ENCODE measurements at regions of chr11 and their contacts with region 1.

Region 1: GRCh38 chr11:110429731-110430266 is at the start of gene FDX1:
- DNase-seq: peak; percentile 87
- ATAC-seq: peak; percentile 86
- H3K4me3 Mint-ChIP-seq: peak within 1 kb of the TSS; percentile 95
- H3K27ac Mint-ChIP-seq: peak within 1 kb of the TSS; percentile 87
- H3K4me1 Mint-ChIP-seq: peaks cover 42% of the 10 kb centered on the region
- H3K27me3 Mint-ChIP-seq: no peaks in the 10 kb centered on the region
- CTCF ChIP-seq: no peak
- total RNA-seq, gene FDX1: 8.7 and 9.4 TPM in 2 replicates

Region 2: DNA sequence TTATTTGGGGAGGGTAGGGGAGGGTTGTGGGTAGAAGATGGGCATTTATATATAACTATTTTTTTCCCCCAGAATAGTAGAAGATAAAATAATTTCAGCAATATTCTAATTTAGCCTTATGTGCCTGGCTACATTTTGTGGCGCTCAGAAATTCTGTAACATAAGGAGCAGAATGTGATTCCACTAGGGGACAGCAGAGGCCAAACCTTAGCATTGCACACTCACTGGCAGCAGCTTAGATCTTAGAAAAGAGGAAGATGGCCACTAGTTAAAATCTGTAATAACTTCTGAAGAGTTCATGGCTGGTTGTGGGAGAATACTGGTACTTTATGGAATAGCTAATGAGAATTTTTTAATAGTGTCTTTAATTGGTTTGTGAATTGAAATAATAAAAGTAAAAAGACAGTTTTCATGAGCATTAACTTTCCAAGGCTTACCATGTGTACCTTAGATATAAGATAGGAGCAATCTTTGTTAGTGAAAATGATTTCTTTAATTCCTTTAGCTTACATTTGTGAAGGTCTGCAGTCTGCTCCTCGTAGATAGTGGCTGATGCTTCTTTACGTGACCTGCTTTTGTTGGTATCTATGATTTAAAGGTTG is 1731.8 kb before region 1 on chr11:
- CTCF ChIA-PET with region 1: no interaction called
- POLR2A ChIA-PET with region 1: no interaction called
- intact Hi-C with region 1: loop called (anchors 10 kb)
- DNase-seq: no peak
- ATAC-seq: peak; percentile 92
- H3K4me3 Mint-ChIP-seq: no peak overlapping the region
- H3K27ac Mint-ChIP-seq: no peak overlapping the region
- H3K4me1 Mint-ChIP-seq: no peaks in the 10 kb centered on the region
- H3K27me3 Mint-ChIP-seq: no peaks in the 10 kb centered on the region
- CTCF ChIP-seq: no peak

Region 3: GRCh38 chr11:110026858-110027626 is 402.8 kb before region 1 on chr11:
- CTCF ChIA-PET with region 1: no interaction called
- POLR2A ChIA-PET with region 1: no interaction called
- intact Hi-C with region 1: loop called (anchors 1 kb)
- DNase-seq: no peak
- ATAC-seq: peak; percentile 95
- H3K4me3 Mint-ChIP-seq: peak overlapping the region; percentile 21
- H3K27ac Mint-ChIP-seq: peak overlapping the region; percentile 59
- H3K4me1 Mint-ChIP-seq: peaks cover 30% of the 10 kb centered on the region
- H3K27me3 Mint-ChIP-seq: peaks cover 34% of the 10 kb centered on the region
- CTCF ChIP-seq: no peak

Region 4: DNA sequence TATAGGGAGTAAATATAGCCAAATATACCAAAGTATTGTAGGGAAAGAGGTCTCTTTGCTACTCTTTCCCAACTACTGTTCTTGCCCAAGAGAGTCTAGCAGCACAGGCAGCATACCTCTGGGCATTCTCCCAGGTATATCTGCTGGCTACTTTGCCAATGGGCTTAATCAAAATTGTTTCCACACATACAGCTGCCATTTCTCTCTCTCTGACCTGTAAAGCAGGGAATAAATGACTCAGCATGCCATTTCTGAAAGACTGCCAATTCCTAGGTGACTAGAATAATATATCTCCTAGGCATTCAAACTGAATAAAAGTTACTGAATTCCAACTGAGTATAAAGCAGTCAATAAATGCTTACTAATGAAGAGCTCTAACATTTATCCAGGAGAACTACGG is 178.0 kb before region 1 on chr11:
- CTCF ChIA-PET with region 1: interaction called, 3 read pairs
- POLR2A ChIA-PET with region 1: no interaction called
- intact Hi-C with region 1: loop called (anchors 5 kb)
- DNase-seq: no peak
- ATAC-seq: no peak
- H3K4me3 Mint-ChIP-seq: no peak overlapping the region
- H3K27ac Mint-ChIP-seq: no peak overlapping the region
- H3K4me1 Mint-ChIP-seq: no peaks in the 10 kb centered on the region
- H3K27me3 Mint-ChIP-seq: no peaks in the 10 kb centered on the region
- CTCF ChIP-seq: no peak

Region 5: DNA sequence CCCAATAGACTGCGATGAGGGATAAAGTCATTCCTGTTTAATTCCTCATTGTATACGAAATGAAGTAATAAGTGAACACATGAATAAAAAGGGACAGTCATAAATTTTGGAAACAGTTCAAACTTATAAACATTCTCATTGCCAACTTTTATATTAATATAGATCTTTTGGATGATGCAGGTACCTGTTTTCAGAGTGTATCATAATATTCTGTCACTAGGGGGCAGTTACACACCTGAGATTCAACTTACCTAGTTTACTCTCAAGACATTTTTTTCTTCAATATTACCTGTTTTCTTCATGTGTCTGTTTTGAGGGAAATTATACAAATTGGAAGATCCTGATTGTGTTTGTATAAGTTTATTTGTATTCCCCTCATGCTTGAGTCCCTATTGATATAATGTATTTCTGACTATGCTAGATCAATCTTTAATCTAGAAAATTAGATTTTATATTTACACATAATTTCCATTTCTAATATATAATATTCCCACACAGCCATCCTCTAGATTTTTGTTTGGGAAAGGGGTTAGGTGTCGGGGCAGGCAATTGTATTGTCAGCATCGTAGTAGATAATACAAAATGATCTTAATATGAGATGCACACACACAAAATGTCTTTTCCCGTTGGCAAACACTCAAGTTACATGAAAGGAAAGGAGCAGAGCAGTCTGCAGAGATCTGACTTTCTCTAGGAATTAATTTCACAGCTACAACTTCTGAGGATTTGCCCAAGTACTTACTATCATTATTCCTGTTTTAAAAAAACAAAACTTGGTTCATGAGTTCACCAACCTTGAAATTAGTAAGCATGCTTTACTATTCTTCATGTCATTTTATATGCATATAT is 18.3 kb after region 1 on chr11:
- CTCF ChIA-PET with region 1: interaction called, 14 read pairs
- POLR2A ChIA-PET with region 1: no interaction called
- intact Hi-C with region 1: no loop called
- DNase-seq: no peak
- ATAC-seq: no peak
- H3K4me3 Mint-ChIP-seq: no peak overlapping the region
- H3K27ac Mint-ChIP-seq: no peak overlapping the region
- H3K4me1 Mint-ChIP-seq: peaks cover 7% of the 10 kb centered on the region
- H3K27me3 Mint-ChIP-seq: no peaks in the 10 kb centered on the region
- CTCF ChIP-seq: no peak

Region 6: GRCh38 chr11:110613197-110613918 is 183.6 kb after region 1 on chr11:
- CTCF ChIA-PET with region 1: no interaction called
- POLR2A ChIA-PET with region 1: no interaction called
- intact Hi-C with region 1: no loop called
- DNase-seq: no peak
- ATAC-seq: no peak
- H3K4me3 Mint-ChIP-seq: no peak overlapping the region
- H3K27ac Mint-ChIP-seq: no peak overlapping the region
- H3K4me1 Mint-ChIP-seq: no peaks in the 10 kb centered on the region
- H3K27me3 Mint-ChIP-seq: peaks cover 4% of the 10 kb centered on the region
- CTCF ChIP-seq: no peak

Region 7: GRCh38 chr11:110833033-110833484 is 403.3 kb after region 1 on chr11:
- CTCF ChIA-PET with region 1: no interaction called
- POLR2A ChIA-PET with region 1: no interaction called
- intact Hi-C with region 1: no loop called
- DNase-seq: no peak
- ATAC-seq: no peak
- H3K4me3 Mint-ChIP-seq: no peak overlapping the region
- H3K27ac Mint-ChIP-seq: no peak overlapping the region
- H3K4me1 Mint-ChIP-seq: no peaks in the 10 kb centered on the region
- H3K27me3 Mint-ChIP-seq: peaks cover 5% of the 10 kb centered on the region
- CTCF ChIP-seq: no peak

Region 8: DNA sequence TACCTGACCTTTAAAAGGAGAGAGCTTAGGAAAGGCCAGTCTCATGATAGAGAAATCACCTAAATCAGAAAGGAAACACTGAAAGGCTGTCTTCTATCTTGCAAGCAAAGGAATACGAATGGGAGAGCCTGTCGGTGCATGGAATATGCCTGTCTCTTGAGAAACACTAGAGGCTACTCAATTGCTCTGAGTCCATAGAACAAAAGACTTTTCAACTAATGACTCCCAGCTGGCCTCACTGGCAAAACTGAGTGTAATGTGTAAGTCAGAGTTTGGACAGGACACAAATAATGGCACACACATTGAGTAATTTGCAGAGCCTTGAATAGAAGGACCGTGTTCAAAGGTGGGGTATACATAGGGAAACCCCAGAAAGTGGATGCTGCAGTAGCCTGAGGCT is 453.5 kb after region 1 on chr11:
- CTCF ChIA-PET with region 1: no interaction called
- POLR2A ChIA-PET with region 1: no interaction called
- intact Hi-C with region 1: no loop called
- DNase-seq: no peak
- ATAC-seq: no peak
- H3K4me3 Mint-ChIP-seq: no peak overlapping the region
- H3K27ac Mint-ChIP-seq: no peak overlapping the region
- H3K4me1 Mint-ChIP-seq: no peaks in the 10 kb centered on the region
- H3K27me3 Mint-ChIP-seq: no peaks in the 10 kb centered on the region
- CTCF ChIP-seq: no peak

Region 9: DNA sequence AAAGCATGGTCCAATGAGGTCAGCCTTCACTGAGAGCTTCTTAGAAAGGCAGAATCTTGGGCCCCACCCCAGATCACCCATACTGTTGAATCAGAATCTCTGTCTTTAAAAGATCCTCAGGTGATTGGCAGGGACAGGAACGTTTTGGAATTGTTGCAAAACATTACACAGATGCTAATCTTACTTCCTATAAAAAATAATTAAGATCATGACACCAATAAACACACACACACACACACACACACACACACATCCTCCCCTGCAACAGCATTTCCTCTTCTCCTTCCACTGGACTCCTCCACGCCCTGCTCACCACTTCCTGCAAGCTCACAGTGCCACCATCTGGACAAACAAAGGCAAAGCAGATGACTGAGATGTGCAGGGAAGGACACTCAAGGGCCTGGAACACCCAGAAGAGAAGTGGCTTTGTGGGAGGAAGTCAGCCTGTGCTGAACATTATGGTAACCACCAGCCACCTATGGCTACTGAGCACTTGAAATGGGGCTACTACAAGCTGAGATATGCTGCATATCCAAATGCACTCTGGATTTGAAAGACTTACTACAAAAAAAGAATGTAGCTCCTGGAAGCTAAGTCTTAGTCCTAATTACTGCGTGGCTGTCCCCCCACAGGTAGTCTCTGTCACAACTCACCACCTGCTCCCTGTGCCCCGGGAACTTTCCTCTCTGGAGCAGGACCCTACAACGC is 1016.8 kb after region 1 on chr11:
- CTCF ChIA-PET with region 1: interaction called, 14 read pairs
- POLR2A ChIA-PET with region 1: interaction called, 3 read pairs
- intact Hi-C with region 1: no loop called
- DNase-seq: peak; percentile 55
- ATAC-seq: peak; percentile 95
- H3K4me3 Mint-ChIP-seq: no peak overlapping the region
- H3K27ac Mint-ChIP-seq: peak overlapping the region; percentile 43
- H3K4me1 Mint-ChIP-seq: peaks cover 36% of the 10 kb centered on the region
- H3K27me3 Mint-ChIP-seq: peaks cover 2% of the 10 kb centered on the region
- CTCF ChIP-seq: no peak

Region 10: GRCh38 chr11:111878849-111879636 is 1449.2 kb after region 1 on chr11 and contains the starts of genes CFAP68 and FDXACB1:
- CTCF ChIA-PET with region 1: no interaction called
- POLR2A ChIA-PET with region 1: no interaction called
- intact Hi-C with region 1: loop called (anchors 10 kb)
- DNase-seq: peak; percentile 88
- ATAC-seq: peak; percentile 88
- H3K4me3 Mint-ChIP-seq: peak within 1 kb of the TSS; percentile 96
- H3K27ac Mint-ChIP-seq: peak within 1 kb of the TSS; percentile 100
- H3K4me1 Mint-ChIP-seq: peaks cover 17% of the 10 kb centered on the region
- H3K27me3 Mint-ChIP-seq: no peaks in the 10 kb centered on the region
- CTCF ChIP-seq: peak; percentile 59
- total RNA-seq, gene CFAP68: 11.6 and 13.7 TPM in 2 replicates
- total RNA-seq, gene FDXACB1: 7.4 and 7.8 TPM in 2 replicates